T-cell (primary cell): ENCODE measurements at regions of chr10 and their contacts with region 1.

Region 1: GRCh38 chr10:6296425-6297296 is 93.9 kb downstream of the PFKFB3 start:
- DNase-seq: no peak
- ATAC-seq: no peak
- H3K4me3 ChIP-seq: no peak overlapping the region
- H3K4me3 Mint-ChIP-seq: no peak overlapping the region
- H3K27ac ChIP-seq: no peak overlapping the region
- H3K27ac Mint-ChIP-seq: no peak overlapping the region
- H3K4me1 ChIP-seq: peaks cover 7 to 22% of the 10 kb centered on the region in 2 experiments
- H3K4me1 Mint-ChIP-seq: peaks cover 42 to 71% (median 68%) of the 10 kb centered on the region in 3 donors
- H3K27me3 ChIP-seq: no peaks in the 10 kb centered on the region
- H3K27me3 Mint-ChIP-seq: no peaks in the 10 kb centered on the region

Region 2: DNA sequence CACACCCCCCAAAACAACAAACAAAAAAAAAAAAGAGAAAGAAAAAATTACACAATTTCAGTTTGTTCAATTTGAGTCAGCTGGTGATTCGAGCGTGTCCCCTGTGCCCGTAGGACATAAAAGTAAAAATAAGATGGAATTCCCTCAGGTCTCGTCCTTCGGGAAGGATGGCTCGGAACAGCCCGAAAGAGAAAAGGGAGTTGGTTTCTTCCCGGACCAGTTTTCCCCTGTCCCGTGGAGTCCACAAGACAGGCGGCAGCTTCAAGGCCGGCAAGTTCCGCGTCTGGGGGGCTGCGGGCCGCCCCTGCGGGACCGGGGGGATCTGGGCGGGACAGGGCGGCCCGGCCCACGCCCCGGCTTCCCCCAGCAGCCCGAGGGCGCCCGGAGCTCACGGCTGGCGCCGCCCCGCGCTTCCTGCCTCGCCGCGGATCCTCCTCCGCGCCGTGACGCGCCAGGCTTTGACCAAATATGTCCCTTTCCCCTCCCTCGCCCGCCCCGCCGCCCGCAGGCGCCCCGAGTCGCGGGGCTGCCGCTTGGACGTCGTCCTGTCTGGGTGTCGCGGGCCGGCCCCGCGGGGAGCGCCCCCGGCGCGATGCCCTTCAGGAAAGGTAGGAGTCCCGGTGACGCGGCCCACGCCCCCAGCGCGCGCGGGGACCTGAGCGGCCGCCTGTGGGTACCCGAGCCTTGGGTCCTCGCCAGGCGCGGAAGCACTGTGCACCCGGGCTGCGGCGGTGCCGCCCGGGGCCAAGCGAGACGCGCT is 152.1 kb before region 1 on chr10:
- CTCF ChIA-PET with region 1: interaction called in 1 of 2 experiments, 10 read pairs
- POLR2A ChIA-PET with region 1: interaction called in 1 of 2 experiments, 3 read pairs
- DNase-seq: peak; percentile 74 to 92 (median 84)
- ATAC-seq: peak; percentile 91 to 96 (median 93)
- H3K4me3 ChIP-seq: peak overlapping the region; percentile 71 to 72
- H3K4me3 Mint-ChIP-seq: peak overlapping the region; percentile 82 to 89 (median 86)
- H3K27ac ChIP-seq: peak overlapping the region; percentile 76
- H3K27ac Mint-ChIP-seq: peak overlapping the region; percentile 87 to 90
- H3K4me1 ChIP-seq: peaks cover 18 to 70% of the 10 kb centered on the region in 2 experiments
- H3K4me1 Mint-ChIP-seq: peaks cover 56 to 81% (median 68%) of the 10 kb centered on the region in 3 donors
- H3K27me3 ChIP-seq: peaks cover 0 to 18% of the 10 kb centered on the region in 2 experiments
- H3K27me3 Mint-ChIP-seq: no peaks in the 10 kb centered on the region

Region 3: DNA sequence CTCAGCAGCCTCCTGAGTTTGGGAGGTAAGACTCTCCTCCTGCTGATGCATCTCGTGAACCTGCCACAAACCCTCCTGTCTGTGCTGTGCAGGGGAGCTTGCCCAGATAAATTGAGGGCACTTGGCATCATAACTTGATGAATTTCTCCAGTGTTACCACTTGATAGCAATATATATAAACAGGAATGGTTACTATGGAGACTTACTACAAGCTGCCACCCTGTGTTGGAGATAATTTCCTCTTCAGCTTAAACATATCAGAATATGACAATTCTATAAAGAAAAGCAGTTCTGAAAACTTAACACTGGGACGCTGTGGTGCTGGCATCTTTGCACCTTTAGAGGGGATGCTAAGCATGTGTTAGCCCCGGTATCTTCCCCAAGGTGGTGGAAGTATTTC is 79.0 kb before region 1 on chr10:
- CTCF ChIA-PET with region 1: interaction called in 1 of 2 experiments, 16 read pairs
- POLR2A ChIA-PET with region 1: no interaction called
- DNase-seq: no peak
- ATAC-seq: no peak
- H3K4me3 ChIP-seq: no peak overlapping the region
- H3K4me3 Mint-ChIP-seq: no peak overlapping the region
- H3K27ac ChIP-seq: no peak overlapping the region
- H3K27ac Mint-ChIP-seq: no peak overlapping the region
- H3K4me1 ChIP-seq: no peaks in the 10 kb centered on the region
- H3K4me1 Mint-ChIP-seq: peaks cover 2 to 5% (median 4%) of the 10 kb centered on the region in 3 donors
- H3K27me3 ChIP-seq: no peaks in the 10 kb centered on the region
- H3K27me3 Mint-ChIP-seq: no peaks in the 10 kb centered on the region

Region 4: GRCh38 chr10:6228010-6228511 is 68.6 kb before region 1 on chr10:
- CTCF ChIA-PET with region 1: no interaction called
- POLR2A ChIA-PET with region 1: no interaction called
- DNase-seq: no peak
- ATAC-seq: no peak
- H3K4me3 ChIP-seq: no peak overlapping the region
- H3K4me3 Mint-ChIP-seq: no peak overlapping the region
- H3K27ac ChIP-seq: no peak overlapping the region
- H3K27ac Mint-ChIP-seq: peak overlapping the region in 1 of 2 donors; percentile 1
- H3K4me1 ChIP-seq: peaks cover 0 to 7% of the 10 kb centered on the region in 2 experiments
- H3K4me1 Mint-ChIP-seq: peaks cover 7 to 9% (median 8%) of the 10 kb centered on the region in 3 donors
- H3K27me3 ChIP-seq: no peaks in the 10 kb centered on the region
- H3K27me3 Mint-ChIP-seq: no peaks in the 10 kb centered on the region

Region 5: DNA sequence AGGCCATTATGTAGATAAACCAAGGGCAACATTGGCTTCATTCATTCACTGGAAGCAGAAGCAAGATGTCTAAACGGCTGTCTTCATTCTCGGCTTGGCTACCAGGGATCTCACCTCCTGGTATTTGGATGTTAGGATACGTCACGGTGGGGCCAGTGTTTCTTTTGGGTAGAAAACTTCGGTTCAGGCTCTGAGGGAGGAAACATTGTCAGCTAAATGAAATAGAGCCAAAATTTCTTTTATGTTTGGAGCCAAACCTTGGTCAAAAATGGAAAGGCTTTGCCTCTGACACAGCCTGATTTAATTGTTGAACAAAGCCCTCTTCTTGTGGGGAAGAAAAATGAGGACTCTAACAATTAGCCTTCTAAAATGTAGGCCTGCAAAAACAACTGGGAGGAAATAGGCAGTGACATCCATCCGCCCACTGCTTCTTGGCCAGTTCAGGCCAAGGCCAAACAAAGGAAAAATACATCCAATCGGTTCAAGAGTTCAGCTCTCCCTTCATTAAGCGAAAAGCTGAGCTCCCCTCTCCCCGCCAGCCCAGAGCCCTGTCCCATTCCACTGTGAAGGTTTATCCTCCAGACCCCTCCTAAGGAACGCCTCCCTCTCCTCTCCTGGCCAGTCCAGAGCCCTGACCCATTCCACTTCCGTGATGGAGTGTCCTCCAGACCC is 49.5 kb before region 1 on chr10:
- CTCF ChIA-PET with region 1: interaction called in 1 of 2 experiments, 3 read pairs
- POLR2A ChIA-PET with region 1: interaction called in 1 of 2 experiments, 10 read pairs
- DNase-seq: no peak
- ATAC-seq: no peak
- H3K4me3 ChIP-seq: no peak overlapping the region
- H3K4me3 Mint-ChIP-seq: no peak overlapping the region
- H3K27ac ChIP-seq: no peak overlapping the region
- H3K27ac Mint-ChIP-seq: no peak overlapping the region
- H3K4me1 ChIP-seq: no peaks in the 10 kb centered on the region
- H3K4me1 Mint-ChIP-seq: no peaks in the 10 kb centered on the region
- H3K27me3 ChIP-seq: no peaks in the 10 kb centered on the region
- H3K27me3 Mint-ChIP-seq: no peaks in the 10 kb centered on the region

Region 6: GRCh38 chr10:6364893-6365292 is 68.2 kb after region 1 on chr10:
- CTCF ChIA-PET with region 1: no interaction called
- POLR2A ChIA-PET with region 1: no interaction called
- DNase-seq: no peak
- ATAC-seq: no peak
- H3K4me3 ChIP-seq: no peak overlapping the region
- H3K4me3 Mint-ChIP-seq: no peak overlapping the region
- H3K27ac ChIP-seq: no peak overlapping the region
- H3K27ac Mint-ChIP-seq: no peak overlapping the region
- H3K4me1 ChIP-seq: no peaks in the 10 kb centered on the region
- H3K4me1 Mint-ChIP-seq: no peaks in the 10 kb centered on the region
- H3K27me3 ChIP-seq: no peaks in the 10 kb centered on the region
- H3K27me3 Mint-ChIP-seq: peaks cover 0 to 2% of the 10 kb centered on the region in 2 donors

Region 7: DNA sequence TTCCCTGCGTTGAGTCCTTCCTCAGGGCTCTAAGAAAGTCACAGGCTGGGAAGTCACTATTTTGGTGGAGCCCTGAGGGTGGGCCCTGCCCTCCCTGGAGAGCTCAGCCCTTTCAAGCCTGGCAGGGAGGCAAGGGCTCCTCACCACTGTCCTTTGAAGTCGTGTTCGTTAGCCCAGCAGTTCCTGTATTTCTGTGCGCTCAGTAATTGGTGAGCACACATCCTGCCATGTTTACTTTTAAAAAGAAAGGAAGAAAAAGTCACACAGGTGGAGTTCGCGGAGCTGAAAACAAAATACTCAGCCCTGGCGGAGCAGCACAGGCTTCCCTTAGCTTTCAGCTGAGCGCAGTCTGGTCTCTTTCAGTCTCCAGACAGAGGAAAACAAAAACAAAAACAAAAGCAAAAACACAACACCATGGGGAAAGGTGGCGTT is 246.4 kb after region 1 on chr10:
- CTCF ChIA-PET with region 1: no interaction called
- POLR2A ChIA-PET with region 1: no interaction called
- DNase-seq: peak in 34 of 35 experiments; percentile 30 to 82 (median 60)
- ATAC-seq: peak; percentile 87 to 91 (median 88)
- H3K4me3 ChIP-seq: peak overlapping the region; percentile 30 to 50
- H3K4me3 Mint-ChIP-seq: peak overlapping the region; percentile 77 to 90 (median 86)
- H3K27ac ChIP-seq: peak overlapping the region; percentile 84
- H3K27ac Mint-ChIP-seq: peak overlapping the region; percentile 100
- H3K4me1 ChIP-seq: peaks cover 39 to 67% of the 10 kb centered on the region in 2 experiments
- H3K4me1 Mint-ChIP-seq: peaks cover 81 to 88% (median 86%) of the 10 kb centered on the region in 3 donors
- H3K27me3 ChIP-seq: no peaks in the 10 kb centered on the region
- H3K27me3 Mint-ChIP-seq: no peaks in the 10 kb centered on the region